ENCODE measurements at regions of chr10 and their contacts with region 1.

Region 1: DNA sequence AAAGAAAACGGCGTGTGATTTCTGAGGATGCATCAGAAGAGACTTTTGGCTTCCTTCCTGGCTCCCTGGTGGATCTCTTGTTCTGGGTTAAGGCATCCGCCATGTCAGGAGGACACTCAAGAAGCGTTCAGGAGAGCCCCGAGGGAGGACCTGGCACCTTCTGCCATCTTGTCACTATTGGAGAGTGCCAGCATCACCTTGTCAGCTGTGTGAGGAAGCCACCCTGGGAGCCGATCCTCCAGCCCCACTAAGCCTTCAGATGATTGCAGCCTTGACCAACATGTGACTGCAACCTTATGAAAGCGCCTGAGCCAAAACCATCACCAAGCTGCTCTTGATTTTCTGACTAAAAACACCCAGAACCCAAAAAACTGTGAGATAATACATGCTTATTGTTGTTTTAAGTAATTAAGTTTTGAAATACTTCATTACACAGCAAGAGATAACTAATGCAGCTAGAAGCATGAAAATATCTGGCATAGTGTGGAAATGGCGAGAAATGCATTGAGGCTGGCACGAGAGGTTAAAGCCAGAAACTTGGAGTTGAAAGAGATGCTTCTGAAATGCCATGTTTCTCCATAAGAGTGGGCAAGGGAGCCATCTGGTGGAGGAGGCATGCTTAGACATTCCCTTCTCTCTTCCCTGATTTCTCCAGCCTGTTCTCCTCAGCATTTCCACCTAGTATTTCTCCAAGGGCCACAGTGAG is 5.4 kb upstream of the ZFYVE27 start:
- DNase-seq: peak; percentile 84
- H3K4me3 ChIP-seq: no peak overlapping the region
- H3K27ac ChIP-seq: no peak overlapping the region
- H3K4me1 ChIP-seq: no peaks in the 10 kb centered on the region
- H3K27me3 ChIP-seq: no peaks in the 10 kb centered on the region
- CTCF ChIP-seq: peak; percentile 73

Region 2: DNA sequence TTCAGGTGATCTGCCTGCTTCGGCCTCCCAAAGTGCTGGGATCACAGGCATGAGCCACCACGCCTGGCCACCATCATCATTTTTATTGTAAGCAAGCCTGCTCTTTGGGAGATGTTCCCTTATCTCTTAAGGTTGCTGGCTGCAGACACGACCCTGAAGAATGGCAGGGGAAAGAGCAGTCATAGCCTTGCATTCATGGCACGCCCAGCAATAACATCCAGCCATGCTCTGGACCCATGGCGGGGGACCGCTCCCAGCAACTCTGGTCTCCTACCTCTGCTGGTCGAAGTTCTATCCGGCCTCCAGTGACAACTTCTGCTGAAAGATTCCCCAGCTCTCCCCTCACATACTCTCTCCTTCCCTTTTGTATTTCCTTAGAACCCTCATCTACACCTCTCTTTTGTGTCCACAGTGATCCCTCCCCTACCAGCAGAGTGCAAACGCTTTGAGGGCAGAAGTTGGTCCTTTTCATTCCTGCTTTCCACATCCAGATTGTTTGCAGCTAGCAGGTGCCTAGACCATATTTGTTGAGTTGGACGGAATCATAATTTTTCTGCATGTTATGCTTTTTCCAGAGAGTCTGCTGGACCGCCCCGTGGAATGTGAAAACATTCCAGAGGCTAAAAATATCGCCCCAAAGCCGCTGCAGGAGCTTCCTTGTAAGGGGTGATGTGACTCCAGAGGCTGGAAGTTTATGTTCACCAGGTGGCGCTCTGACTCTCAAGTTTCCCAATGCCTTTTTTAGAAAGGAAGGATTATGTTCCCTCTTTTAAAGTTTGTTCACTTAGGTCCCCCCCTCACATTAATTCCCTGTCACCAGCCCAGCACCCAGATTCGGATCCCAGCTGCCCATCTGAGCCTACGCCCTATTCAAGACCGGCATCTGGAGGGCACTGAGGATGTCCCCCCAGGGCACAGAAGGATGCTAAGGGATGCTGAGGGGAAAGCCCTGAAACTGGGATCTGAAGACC is 22.2 kb before region 1 on chr10:
- intact Hi-C with region 1: loop called (anchors 2 kb)
- DNase-seq: peak; percentile 82
- H3K4me3 ChIP-seq: no peak overlapping the region
- H3K27ac ChIP-seq: no peak overlapping the region
- H3K4me1 ChIP-seq: no peaks in the 10 kb centered on the region
- H3K27me3 ChIP-seq: no peaks in the 10 kb centered on the region
- CTCF ChIP-seq: peak; percentile 47